Caco-2 (cell line): ENCODE measurements at regions of chr1 and their contacts with region 1.

Region 1: DNA sequence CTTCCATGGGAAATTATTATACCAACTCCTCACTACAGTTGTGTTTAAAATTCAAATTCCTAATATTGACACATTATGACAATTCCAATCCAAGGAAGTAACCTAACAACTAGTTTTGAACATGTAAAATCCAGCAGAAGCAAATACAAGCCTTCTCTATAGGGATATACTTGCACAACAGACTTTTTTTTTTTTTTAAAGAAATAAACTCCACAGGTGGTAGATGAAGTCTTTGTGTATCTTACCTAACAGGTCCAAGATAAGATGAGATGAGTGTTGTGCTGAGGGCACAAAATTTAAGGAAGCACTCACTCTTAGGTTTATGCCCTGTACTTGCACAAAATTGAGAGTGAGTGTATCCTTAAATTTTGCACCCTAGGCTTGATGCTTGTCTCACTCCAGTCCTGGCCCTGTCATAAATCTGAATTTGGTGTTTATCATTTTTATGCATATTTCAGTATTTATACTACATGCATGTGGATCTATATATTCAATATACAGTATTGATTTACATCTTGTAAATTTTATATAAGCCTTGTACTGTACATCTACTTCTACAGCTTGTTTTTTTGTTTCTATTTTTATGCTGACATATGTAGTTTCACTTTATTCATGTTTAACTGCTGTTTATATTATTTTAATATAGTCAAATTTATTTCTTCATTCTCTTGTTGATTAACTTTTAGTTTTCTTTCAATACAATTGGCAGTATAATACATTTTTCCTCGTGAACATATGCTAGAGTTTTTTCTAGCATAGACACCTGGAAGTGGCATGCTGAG is 60.6 kb upstream of the RGL1 start:
- DNase-seq: no peak
- H3K4me3 ChIP-seq: no peak overlapping the region
- H3K4me3 Mint-ChIP-seq: no peak overlapping the region
- H3K27ac Mint-ChIP-seq: no peak overlapping the region
- H3K4me1 ChIP-seq: peaks cover 7% of the 10 kb centered on the region; the same call in 1 of the 2 replicates
- H3K4me1 Mint-ChIP-seq: peaks cover 16% of the 10 kb centered on the region
- H3K27me3 ChIP-seq: no peaks in the 10 kb centered on the region
- H3K27me3 Mint-ChIP-seq: no peaks in the 10 kb centered on the region
- CTCF ChIP-seq: no peak

Region 2: DNA sequence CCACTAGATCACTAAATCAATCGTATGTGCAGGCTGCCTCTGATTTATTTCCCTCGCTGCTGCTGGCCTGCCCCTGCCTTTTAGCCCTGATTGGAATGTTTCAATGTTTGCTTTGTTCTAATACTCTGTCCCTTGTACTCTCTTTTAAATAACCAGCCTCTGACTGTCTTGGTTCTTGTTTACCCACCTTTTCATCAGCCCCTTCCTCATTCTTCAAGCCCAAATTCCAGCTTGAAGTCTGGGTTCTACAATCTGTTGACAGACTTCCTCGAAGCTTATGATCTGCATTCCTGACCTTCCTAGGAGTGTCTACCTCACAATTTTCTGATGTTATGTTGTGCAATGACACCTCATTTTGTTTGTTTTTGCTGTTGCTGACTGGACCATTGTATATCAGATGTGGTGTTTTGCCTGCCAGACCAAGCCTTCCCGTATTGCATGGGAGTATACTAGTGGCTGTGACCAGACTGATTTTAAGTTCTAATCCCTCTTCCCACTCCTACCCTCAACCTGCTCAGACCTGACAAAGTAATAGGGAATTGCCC is 44.6 kb before region 1 on chr1:
- CTCF ChIA-PET with region 1: no interaction called
- POLR2A ChIA-PET with region 1: no interaction called
- intact Hi-C with region 1: no loop called
- DNase-seq: peak; percentile 90 to 91
- H3K4me3 ChIP-seq: no peak overlapping the region
- H3K4me3 Mint-ChIP-seq: peak overlapping the region; percentile 70
- H3K27ac Mint-ChIP-seq: peak overlapping the region; percentile 93
- H3K4me1 ChIP-seq: peaks cover 61% of the 10 kb centered on the region
- H3K4me1 Mint-ChIP-seq: peaks cover 41% of the 10 kb centered on the region
- H3K27me3 ChIP-seq: no peaks in the 10 kb centered on the region
- H3K27me3 Mint-ChIP-seq: no peaks in the 10 kb centered on the region
- CTCF ChIP-seq: no peak

Region 3: GRCh38 chr1:183733715-183734114 is 10.6 kb before region 1 on chr1:
- CTCF ChIA-PET with region 1: no interaction called
- POLR2A ChIA-PET with region 1: no interaction called
- intact Hi-C with region 1: no loop called
- DNase-seq: no peak
- H3K4me3 ChIP-seq: no peak overlapping the region
- H3K4me3 Mint-ChIP-seq: no peak overlapping the region
- H3K27ac Mint-ChIP-seq: peak overlapping the region; percentile 68
- H3K4me1 ChIP-seq: peaks cover 82% of the 10 kb centered on the region
- H3K4me1 Mint-ChIP-seq: peaks cover 53% of the 10 kb centered on the region
- H3K27me3 ChIP-seq: no peaks in the 10 kb centered on the region
- H3K27me3 Mint-ChIP-seq: no peaks in the 10 kb centered on the region
- CTCF ChIP-seq: no peak

Region 4: GRCh38 chr1:183758913-183759312 is 14.6 kb after region 1 on chr1:
- CTCF ChIA-PET with region 1: no interaction called
- POLR2A ChIA-PET with region 1: no interaction called
- intact Hi-C with region 1: loop called (anchors 2 kb)
- DNase-seq: no peak
- H3K4me3 ChIP-seq: no peak overlapping the region
- H3K4me3 Mint-ChIP-seq: no peak overlapping the region
- H3K27ac Mint-ChIP-seq: peak overlapping the region; percentile 62
- H3K4me1 ChIP-seq: peaks cover 29% of the 10 kb centered on the region
- H3K4me1 Mint-ChIP-seq: peaks cover 15% of the 10 kb centered on the region
- H3K27me3 ChIP-seq: no peaks in the 10 kb centered on the region
- H3K27me3 Mint-ChIP-seq: no peaks in the 10 kb centered on the region
- CTCF ChIP-seq: no peak